ENCODE measurements at regions of chr15 and their contacts with region 1.

Region 1: GRCh38 chr15:39782441-39783138 is at the start of gene FSIP1:
- DNase-seq: peak; percentile 97
- H3K4me3 ChIP-seq: peak within 1 kb of the TSS; percentile 92
- H3K4me3 Mint-ChIP-seq: peak within 1 kb of the TSS; percentile 72
- H3K27ac Mint-ChIP-seq: peak within 1 kb of the TSS; percentile 21
- H3K4me1 ChIP-seq: peaks cover 28% of the 10 kb centered on the region
- H3K4me1 Mint-ChIP-seq: peaks cover 24% of the 10 kb centered on the region
- H3K27me3 ChIP-seq: no peaks in the 10 kb centered on the region
- H3K27me3 Mint-ChIP-seq: no peaks in the 10 kb centered on the region
- CTCF ChIP-seq: no peak
- total RNA-seq, gene FSIP1: 1.3 and 2.1 TPM in 2 replicates

Region 2: DNA sequence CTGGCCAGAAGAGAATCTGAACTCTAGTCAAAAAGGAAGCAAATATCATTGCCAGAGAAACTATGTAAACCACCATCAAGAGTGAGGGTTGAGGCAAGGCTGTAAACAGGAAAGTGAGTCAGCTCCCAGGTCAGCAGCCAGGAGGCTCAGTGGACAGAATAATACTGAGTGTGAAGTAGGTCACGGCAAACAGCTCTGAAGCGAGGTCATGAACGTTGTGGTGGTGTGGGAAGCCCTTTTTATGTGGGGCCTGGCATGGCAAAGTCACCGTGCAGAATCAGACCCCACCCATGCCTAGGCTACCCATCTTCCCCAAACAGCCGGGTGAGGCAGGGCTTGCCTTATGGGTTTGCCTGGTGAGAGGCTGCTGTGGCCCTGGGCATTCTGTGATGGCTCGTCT is 157.8 kb before region 1 on chr15:
- CTCF ChIA-PET with region 1: no interaction called
- POLR2A ChIA-PET with region 1: no interaction called
- intact Hi-C with region 1: no loop called
- DNase-seq: no peak
- H3K4me3 ChIP-seq: no peak overlapping the region
- H3K4me3 Mint-ChIP-seq: no peak overlapping the region
- H3K27ac Mint-ChIP-seq: no peak overlapping the region
- H3K4me1 ChIP-seq: 0 out of 2 replicates have a peak, but pooled peaks cover 4% of the 10 kb centered on the region
- H3K4me1 Mint-ChIP-seq: peaks cover 12% of the 10 kb centered on the region
- H3K27me3 ChIP-seq: no peaks in the 10 kb centered on the region
- H3K27me3 Mint-ChIP-seq: no peaks in the 10 kb centered on the region
- CTCF ChIP-seq: no peak

Region 3: DNA sequence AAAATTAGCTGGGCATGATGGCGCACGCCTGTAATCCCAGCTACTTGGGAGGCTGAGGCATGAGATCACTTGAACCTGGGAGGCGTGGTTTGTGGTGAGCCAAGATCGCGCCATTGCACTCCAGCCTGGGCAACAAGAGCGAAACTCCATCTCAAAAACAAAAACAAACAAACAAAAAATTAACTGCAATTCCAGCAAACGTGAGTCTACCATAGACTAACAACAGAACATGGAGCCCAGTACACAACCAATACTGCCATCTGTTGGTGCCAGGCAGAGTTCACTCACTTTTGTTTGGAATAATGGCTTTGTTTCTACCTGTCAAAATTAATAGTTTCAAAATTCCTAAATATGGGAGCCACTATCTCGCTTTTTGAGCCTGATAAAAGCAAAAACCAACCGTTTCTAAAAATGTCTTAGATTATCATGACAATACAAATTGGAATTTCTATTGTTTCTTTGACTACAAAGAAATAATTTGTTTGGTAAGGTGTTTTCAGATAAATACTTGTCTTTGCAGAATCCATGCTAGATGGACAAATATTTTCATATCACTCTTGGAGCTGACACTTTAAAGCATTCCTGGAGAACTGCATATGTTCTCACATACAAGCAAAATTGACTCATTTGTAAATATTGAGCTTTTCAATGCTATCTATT is 92.4 kb after region 1 on chr15:
- CTCF ChIA-PET with region 1: no interaction called
- POLR2A ChIA-PET with region 1: no interaction called
- intact Hi-C with region 1: loop called (anchors 1 kb)
- DNase-seq: peak in 1 of 2 experiments; percentile 46
- H3K4me3 ChIP-seq: no peak overlapping the region
- H3K4me3 Mint-ChIP-seq: no peak overlapping the region
- H3K27ac Mint-ChIP-seq: no peak overlapping the region
- H3K4me1 ChIP-seq: peaks cover 5% of the 10 kb centered on the region; the same call in 1 of the 2 replicates
- H3K4me1 Mint-ChIP-seq: peaks cover 24% of the 10 kb centered on the region
- H3K27me3 ChIP-seq: no peaks in the 10 kb centered on the region
- H3K27me3 Mint-ChIP-seq: no peaks in the 10 kb centered on the region
- CTCF ChIP-seq: peak; percentile 49 to 67

Region 4: GRCh38 chr15:39934397-39935071 is 151.9 kb after region 1 on chr15:
- CTCF ChIA-PET with region 1: no interaction called
- POLR2A ChIA-PET with region 1: interaction called, 5 read pairs
- intact Hi-C with region 1: loop called (anchors 5 kb)
- DNase-seq: no peak
- H3K4me3 ChIP-seq: peak overlapping the region; percentile 86
- H3K4me3 Mint-ChIP-seq: peak overlapping the region; percentile 92
- H3K27ac Mint-ChIP-seq: peak overlapping the region; percentile 87
- H3K4me1 ChIP-seq: peaks cover 17% of the 10 kb centered on the region; the same call in 1 of the 2 replicates
- H3K4me1 Mint-ChIP-seq: peaks cover 10% of the 10 kb centered on the region
- H3K27me3 ChIP-seq: no peaks in the 10 kb centered on the region
- H3K27me3 Mint-ChIP-seq: no peaks in the 10 kb centered on the region
- CTCF ChIP-seq: no peak

Region 5: GRCh38 chr15:39976291-39977274 is 194.0 kb after region 1 on chr15:
- CTCF ChIA-PET with region 1: interaction called, 4 read pairs
- POLR2A ChIA-PET with region 1: no interaction called
- intact Hi-C with region 1: loop called (anchors 2 kb)
- DNase-seq: peak; percentile 75 to 81
- H3K4me3 ChIP-seq: peak overlapping the region; percentile 74
- H3K4me3 Mint-ChIP-seq: peak overlapping the region; percentile 75
- H3K27ac Mint-ChIP-seq: peak overlapping the region; percentile 85
- H3K4me1 ChIP-seq: peaks cover 3% of the 10 kb centered on the region; the same call in 1 of the 2 replicates
- H3K4me1 Mint-ChIP-seq: peaks cover 6% of the 10 kb centered on the region
- H3K27me3 ChIP-seq: no peaks in the 10 kb centered on the region
- H3K27me3 Mint-ChIP-seq: no peaks in the 10 kb centered on the region
- CTCF ChIP-seq: peak in 1 of 2 experiments; percentile 58

Region 6: GRCh38 chr15:40002295-40002694 is 219.7 kb after region 1 on chr15:
- CTCF ChIA-PET with region 1: no interaction called
- POLR2A ChIA-PET with region 1: no interaction called
- intact Hi-C with region 1: loop called (anchors 10 kb)
- DNase-seq: peak; percentile 89 to 94
- H3K4me3 ChIP-seq: no peak overlapping the region
- H3K4me3 Mint-ChIP-seq: peak overlapping the region; percentile 57
- H3K27ac Mint-ChIP-seq: no peak overlapping the region
- H3K4me1 ChIP-seq: peaks cover 27% of the 10 kb centered on the region
- H3K4me1 Mint-ChIP-seq: peaks cover 13% of the 10 kb centered on the region
- H3K27me3 ChIP-seq: no peaks in the 10 kb centered on the region
- H3K27me3 Mint-ChIP-seq: no peaks in the 10 kb centered on the region
- CTCF ChIP-seq: no peak

Region 7: GRCh38 chr15:40038638-40039543 is 256.3 kb after region 1 on chr15 and contains the start of gene SRP14:
- CTCF ChIA-PET with region 1: no interaction called
- POLR2A ChIA-PET with region 1: no interaction called
- intact Hi-C with region 1: loop called (anchors 1 kb)
- DNase-seq: peak; percentile 90 to 92
- H3K4me3 ChIP-seq: peak within 1 kb of the TSS; percentile 78
- H3K4me3 Mint-ChIP-seq: peak within 1 kb of the TSS; percentile 98
- H3K27ac Mint-ChIP-seq: peak within 1 kb of the TSS; percentile 97
- H3K4me1 ChIP-seq: 0 out of 2 replicates have a peak, but pooled peaks cover 4% of the 10 kb centered on the region
- H3K4me1 Mint-ChIP-seq: peaks cover 8% of the 10 kb centered on the region
- H3K27me3 ChIP-seq: no peaks in the 10 kb centered on the region
- H3K27me3 Mint-ChIP-seq: no peaks in the 10 kb centered on the region
- CTCF ChIP-seq: no peak
- total RNA-seq, gene SRP14: 220 and 223 TPM in 2 replicates

Region 8: DNA sequence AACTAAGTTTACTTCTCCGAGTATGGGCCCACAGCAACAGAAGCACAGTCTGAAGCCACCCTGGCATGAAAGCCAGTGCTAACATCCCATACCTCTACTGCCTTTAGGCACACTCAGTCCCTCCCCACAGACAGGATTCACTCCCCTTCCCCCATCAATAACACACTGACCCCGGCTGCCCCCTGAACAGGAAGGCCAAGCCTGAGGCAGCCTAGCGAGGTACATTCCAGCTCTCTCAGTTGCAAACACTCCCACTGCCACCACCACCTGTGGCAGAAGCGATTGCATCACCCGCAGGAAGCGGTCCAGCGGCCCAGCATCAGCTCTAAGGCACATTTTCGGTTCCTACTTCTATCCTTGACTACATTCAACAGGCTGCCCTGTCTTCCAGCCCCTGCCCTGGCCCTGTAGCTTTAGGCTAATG is 333.1 kb after region 1 on chr15:
- CTCF ChIA-PET with region 1: no interaction called
- POLR2A ChIA-PET with region 1: no interaction called
- intact Hi-C with region 1: no loop called
- DNase-seq: peak; percentile 61 to 71
- H3K4me3 ChIP-seq: no peak overlapping the region
- H3K4me3 Mint-ChIP-seq: no peak overlapping the region
- H3K27ac Mint-ChIP-seq: peak overlapping the region; percentile 5
- H3K4me1 ChIP-seq: no peaks in the 10 kb centered on the region; the same call in 1 of the 2 replicates
- H3K4me1 Mint-ChIP-seq: peaks cover 14% of the 10 kb centered on the region
- H3K27me3 ChIP-seq: no peaks in the 10 kb centered on the region
- H3K27me3 Mint-ChIP-seq: no peaks in the 10 kb centered on the region
- CTCF ChIP-seq: no peak